ENCODE measurements at regions of chr4 and their contacts with region 1.

Region 1: GRCh38 chr4:70505151-70505748 is 13.1 kb upstream of the AMTN start:
- DNase-seq: peak; percentile 39
- ATAC-seq: peak; percentile 56
- H3K4me3 ChIP-seq: no peak overlapping the region
- H3K4me3 Mint-ChIP-seq: no peak overlapping the region
- H3K27ac ChIP-seq: no peak overlapping the region
- H3K27ac Mint-ChIP-seq: no peak overlapping the region
- H3K4me1 ChIP-seq: no peaks in the 10 kb centered on the region
- H3K4me1 Mint-ChIP-seq: no peaks in the 10 kb centered on the region
- H3K27me3 ChIP-seq: no peaks in the 10 kb centered on the region
- H3K27me3 Mint-ChIP-seq: no peaks in the 10 kb centered on the region
- CTCF ChIP-seq: peak; percentile 95

Region 2: GRCh38 chr4:69689599-69689998 is 815.7 kb before region 1 on chr4:
- CTCF ChIA-PET with region 1: no interaction called
- POLR2A ChIA-PET with region 1: no interaction called
- intact Hi-C with region 1: loop called (anchors 10 kb)
- DNase-seq: peak; percentile 9
- ATAC-seq: no peak
- H3K4me3 ChIP-seq: no peak overlapping the region
- H3K4me3 Mint-ChIP-seq: no peak overlapping the region
- H3K27ac ChIP-seq: no peak overlapping the region
- H3K27ac Mint-ChIP-seq: no peak overlapping the region
- H3K4me1 ChIP-seq: no peaks in the 10 kb centered on the region
- H3K4me1 Mint-ChIP-seq: no peaks in the 10 kb centered on the region
- H3K27me3 ChIP-seq: no peaks in the 10 kb centered on the region
- H3K27me3 Mint-ChIP-seq: no peaks in the 10 kb centered on the region
- CTCF ChIP-seq: peak; percentile 36

Region 3: DNA sequence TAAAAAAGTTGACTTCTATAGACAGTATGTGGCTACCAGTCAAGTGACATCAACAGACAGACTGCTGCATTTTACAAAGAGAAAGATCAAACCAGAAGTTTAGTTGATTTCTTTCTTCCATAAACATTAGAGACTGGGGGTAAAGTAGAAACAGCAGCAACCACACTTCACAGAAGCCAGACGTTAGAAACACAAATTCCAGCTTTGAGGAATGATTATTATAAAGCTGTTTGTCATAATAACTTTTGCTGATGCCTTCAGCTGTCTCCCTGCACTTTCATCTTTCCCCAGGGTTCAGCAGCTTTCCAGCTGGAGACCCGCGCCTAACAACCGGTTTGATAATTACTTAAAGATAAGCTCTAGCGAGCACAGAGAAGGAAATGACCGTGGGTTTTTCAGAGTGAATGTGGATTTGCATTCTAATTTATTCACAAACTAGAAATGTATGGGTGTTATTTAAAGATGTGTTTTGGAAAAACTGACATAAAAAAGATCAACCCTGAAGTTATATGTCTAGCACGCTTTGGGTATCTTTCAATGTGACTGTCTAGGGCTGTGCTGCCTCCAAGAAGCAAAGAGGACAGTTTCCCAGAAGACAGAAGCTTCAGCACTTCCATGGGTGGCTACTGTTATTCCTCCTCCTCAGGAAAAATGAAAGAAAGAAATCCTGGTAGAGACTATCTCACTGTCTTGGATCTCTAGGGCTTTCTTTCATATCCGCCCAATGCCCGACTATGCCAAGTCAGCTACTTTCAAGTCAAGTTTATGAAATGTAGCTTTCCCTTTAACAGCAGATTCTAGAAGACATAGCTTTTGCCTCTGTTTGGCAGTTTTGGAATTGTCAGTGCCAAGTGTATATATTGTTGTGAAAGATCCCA is 108.3 kb after region 1 on chr4:
- CTCF ChIA-PET with region 1: no interaction called
- POLR2A ChIA-PET with region 1: no interaction called
- intact Hi-C with region 1: no loop called
- DNase-seq: peak; percentile 12
- ATAC-seq: no peak
- H3K4me3 ChIP-seq: peak overlapping the region in 1 of 5 experiments; percentile 21
- H3K4me3 Mint-ChIP-seq: peak overlapping the region; percentile 46
- H3K27ac ChIP-seq: peak overlapping the region in 1 of 2 donors; percentile 18
- H3K27ac Mint-ChIP-seq: no peak overlapping the region
- H3K4me1 ChIP-seq: peaks cover 16 to 17% of the 10 kb centered on the region in 2 donors
- H3K4me1 Mint-ChIP-seq: peaks cover 20% of the 10 kb centered on the region
- H3K27me3 ChIP-seq: no peaks in the 10 kb centered on the region
- H3K27me3 Mint-ChIP-seq: peaks cover under 1% of the 10 kb centered on the region
- CTCF ChIP-seq: no peak

Region 4: GRCh38 chr4:70901984-70902576 is 396.8 kb after region 1 on chr4 and contains the start of gene MOB1B:
- CTCF ChIA-PET with region 1: no interaction called
- POLR2A ChIA-PET with region 1: no interaction called
- intact Hi-C with region 1: no loop called
- DNase-seq: peak; percentile 85
- ATAC-seq: peak; percentile 95
- H3K4me3 ChIP-seq: peak within 1 kb of the TSS; percentile 72 to 98 (median 77)
- H3K4me3 Mint-ChIP-seq: peak within 1 kb of the TSS; percentile 99
- H3K27ac ChIP-seq: peak within 1 kb of the TSS; percentile 41 to 76
- H3K27ac Mint-ChIP-seq: peak within 1 kb of the TSS; percentile 89
- H3K4me1 ChIP-seq: peaks cover 13% of the 10 kb centered on the region in 2 donors
- H3K4me1 Mint-ChIP-seq: peaks cover 29% of the 10 kb centered on the region
- H3K27me3 ChIP-seq: no peaks in the 10 kb centered on the region
- H3K27me3 Mint-ChIP-seq: no peaks in the 10 kb centered on the region
- CTCF ChIP-seq: peak; percentile 61
- total RNA-seq, gene MOB1B: 30.4 and 32.4 TPM in 2 replicates